Esophagus squamous epithelium (tissue), 5 donors: ENCODE measurements at regions of chrX and their contacts with region 1.

Region 1: GRCh38 chrX:86171366-86171765 is 23.1 kb downstream of the DACH2 start:
- DNase-seq: no peak
- H3K4me3 ChIP-seq: no peak overlapping the region
- H3K27ac ChIP-seq: no peak overlapping the region
- H3K4me1 ChIP-seq: no peaks in the 10 kb centered on the region
- H3K27me3 ChIP-seq: no peaks in the 10 kb centered on the region
- CTCF ChIP-seq: peak in 1 of 6 experiments; percentile 27
- POLR2A ChIP-seq: no peak

Region 2: DNA sequence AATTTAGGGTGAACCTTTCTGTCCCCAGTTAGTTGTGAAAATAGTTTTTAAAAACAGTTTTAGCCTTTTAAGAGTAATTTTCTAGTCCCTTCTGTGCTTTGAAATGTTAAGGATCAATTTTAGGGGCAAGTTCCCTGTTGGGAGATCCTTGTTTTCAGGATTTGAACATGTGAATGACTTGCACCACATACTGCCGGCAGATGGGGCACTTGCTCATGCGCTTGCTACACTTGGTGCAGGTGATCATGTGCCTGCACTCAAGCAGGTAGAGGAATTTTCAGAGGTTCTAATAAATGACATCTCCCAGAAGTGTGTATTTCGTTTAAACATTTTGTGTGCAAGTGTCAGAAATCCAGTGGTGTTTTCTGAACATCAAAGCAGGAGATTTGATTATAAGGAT is 319.9 kb before region 1 on chrX:
- intact Hi-C with region 1: loop called (anchors 5 kb)
- DNase-seq: no peak
- H3K4me3 ChIP-seq: no peak overlapping the region
- H3K27ac ChIP-seq: no peak overlapping the region
- H3K4me1 ChIP-seq: no peaks in the 10 kb centered on the region
- H3K27me3 ChIP-seq: no peaks in the 10 kb centered on the region
- CTCF ChIP-seq: peak in 3 of 6 experiments; percentile 14 to 32 (median 20)
- POLR2A ChIP-seq: no peak

Region 3: DNA sequence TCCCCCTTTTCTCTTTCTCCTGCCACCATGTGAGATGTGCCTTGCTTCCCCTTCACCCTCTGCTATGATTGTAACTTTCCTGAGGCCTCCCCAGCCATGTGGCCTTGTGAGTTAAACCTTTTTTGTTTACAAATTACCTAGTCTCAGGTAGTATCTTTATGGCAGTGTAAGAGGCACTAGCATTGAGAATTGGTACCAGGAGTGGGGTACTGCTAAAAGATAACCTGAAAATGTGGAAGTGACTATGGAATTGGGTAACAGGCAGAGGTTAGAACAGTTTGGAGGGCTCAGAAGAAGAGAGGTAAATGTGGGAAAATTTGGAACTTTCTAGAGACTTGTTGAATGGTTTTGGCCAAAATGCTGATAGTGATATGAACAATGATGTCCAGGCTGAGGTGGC is 306.0 kb before region 1 on chrX:
- intact Hi-C with region 1: no loop called
- DNase-seq: no peak
- H3K4me3 ChIP-seq: no peak overlapping the region
- H3K27ac ChIP-seq: no peak overlapping the region
- H3K4me1 ChIP-seq: no peaks in the 10 kb centered on the region
- H3K27me3 ChIP-seq: no peaks in the 10 kb centered on the region
- CTCF ChIP-seq: no peak
- POLR2A ChIP-seq: no peak